ENCODE measurements at regions of chr16 and their contacts with region 1.

Region 1: DNA sequence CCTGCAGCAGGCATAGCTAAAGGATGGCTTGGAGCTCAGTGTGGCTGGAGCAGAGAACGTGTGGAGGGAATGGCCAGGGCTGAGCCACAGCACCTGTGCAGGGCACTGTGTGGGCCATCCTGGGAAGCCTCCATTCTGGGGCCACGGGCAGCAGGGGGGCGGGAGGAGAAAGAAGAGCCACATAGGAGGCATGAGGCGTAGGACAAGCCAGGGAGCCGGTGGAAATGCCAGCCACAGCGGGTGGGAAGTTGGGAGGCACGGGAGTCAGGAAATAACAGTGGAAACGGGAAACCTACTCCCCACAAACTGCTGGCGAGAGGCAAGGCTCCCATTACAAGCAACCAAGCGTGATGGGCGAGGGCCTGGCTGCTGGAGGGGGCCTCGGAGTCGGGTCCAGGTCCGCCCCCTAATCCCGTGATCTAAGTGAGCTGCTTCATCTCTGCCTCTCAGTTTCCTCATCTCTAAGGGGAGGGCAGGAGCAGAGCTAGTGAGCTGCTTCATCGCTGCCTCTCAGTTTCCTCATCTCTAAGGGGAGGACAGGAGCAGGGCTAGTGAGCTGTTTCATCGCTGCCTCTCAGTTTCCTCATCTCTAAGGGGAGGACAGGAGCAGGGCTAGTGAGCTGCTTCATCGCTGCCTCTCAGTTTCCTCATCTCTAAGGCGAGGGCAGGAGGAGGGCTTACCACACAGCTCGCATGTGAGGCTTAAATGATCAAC is 104.9 kb downstream of the ADCY9 start:
- DNase-seq: no peak
- ATAC-seq: peak in 6 of 8 donors; percentile 23 to 60 (median 35)
- H3K4me3 ChIP-seq: peak overlapping the region in 1 of 10 donors; percentile 16
- H3K27ac ChIP-seq: peak overlapping the region in 2 of 10 donors; percentile 33 to 37
- H3K4me1 ChIP-seq: peaks cover 0 to 35% (median 16%) of the 10 kb centered on the region in 9 donors
- H3K27me3 ChIP-seq: no peaks in the 10 kb centered on the region
- CTCF ChIP-seq: no peak

Region 2: DNA sequence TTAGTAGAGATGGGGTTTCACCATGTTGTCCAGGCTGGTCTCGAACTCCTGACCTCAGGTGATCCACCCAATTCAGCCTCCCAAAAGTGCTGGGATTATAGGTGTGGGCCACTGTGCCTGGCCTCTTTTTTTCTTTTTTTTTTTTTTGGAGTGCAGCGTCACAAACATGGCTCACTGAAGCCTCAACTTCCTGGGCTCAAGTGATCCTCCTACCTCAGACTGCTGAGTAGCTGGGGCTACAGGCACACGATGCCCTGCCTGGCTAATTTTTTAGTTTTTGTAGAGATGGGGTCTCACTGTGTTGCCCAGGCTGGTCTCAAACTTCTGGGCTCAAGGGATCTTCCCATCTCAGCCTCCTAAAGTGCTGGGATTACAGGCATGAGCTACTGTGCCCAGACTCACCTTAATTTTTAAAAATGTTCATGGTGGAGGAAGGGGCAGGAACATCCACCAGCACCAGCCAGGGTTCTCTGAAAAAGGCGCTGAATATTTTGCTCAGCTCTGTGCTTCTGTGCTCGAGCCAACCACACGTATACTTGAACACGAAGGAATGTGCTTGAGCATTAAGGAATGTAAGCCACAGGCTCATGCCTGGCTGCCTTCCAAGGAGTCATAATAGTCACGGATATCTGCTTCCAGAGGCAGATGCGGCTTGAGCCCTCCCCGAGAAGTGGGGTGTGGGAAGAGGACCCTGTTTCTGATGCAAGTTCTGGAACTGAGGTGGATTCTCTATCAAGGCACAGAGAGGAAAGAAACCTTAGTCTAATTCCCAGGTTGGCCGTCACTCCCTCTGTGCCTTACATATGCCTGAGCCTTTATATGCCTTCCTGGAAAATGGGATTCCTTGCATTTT is 65.4 kb before region 1 on chr16:
- intact Hi-C with region 1: loop called in 1 of 10 experiments (anchors 5 kb)
- DNase-seq: peak in 1 of 2 donors; percentile 34
- ATAC-seq: no peak
- H3K4me3 ChIP-seq: no peak overlapping the region
- H3K27ac ChIP-seq: peak overlapping the region in 2 of 10 donors; percentile 6 to 53
- H3K4me1 ChIP-seq: peaks cover 6 to 39% (median 31%) of the 10 kb centered on the region in 9 donors
- H3K27me3 ChIP-seq: no peaks in the 10 kb centered on the region
- CTCF ChIP-seq: no peak

Region 3: GRCh38 chr16:3964686-3965290 is 46.6 kb before region 1 on chr16:
- intact Hi-C with region 1: loop called in 1 of 10 experiments (anchors 5 kb)
- DNase-seq: no peak
- ATAC-seq: peak in 2 of 8 donors; percentile 3 to 45
- H3K4me3 ChIP-seq: no peak overlapping the region
- H3K27ac ChIP-seq: peak overlapping the region in 2 of 10 donors; percentile 9 to 22
- H3K4me1 ChIP-seq: peaks cover 3 to 44% (median 38%) of the 10 kb centered on the region in 9 donors
- H3K27me3 ChIP-seq: no peaks in the 10 kb centered on the region
- CTCF ChIP-seq: no peak

Region 4: DNA sequence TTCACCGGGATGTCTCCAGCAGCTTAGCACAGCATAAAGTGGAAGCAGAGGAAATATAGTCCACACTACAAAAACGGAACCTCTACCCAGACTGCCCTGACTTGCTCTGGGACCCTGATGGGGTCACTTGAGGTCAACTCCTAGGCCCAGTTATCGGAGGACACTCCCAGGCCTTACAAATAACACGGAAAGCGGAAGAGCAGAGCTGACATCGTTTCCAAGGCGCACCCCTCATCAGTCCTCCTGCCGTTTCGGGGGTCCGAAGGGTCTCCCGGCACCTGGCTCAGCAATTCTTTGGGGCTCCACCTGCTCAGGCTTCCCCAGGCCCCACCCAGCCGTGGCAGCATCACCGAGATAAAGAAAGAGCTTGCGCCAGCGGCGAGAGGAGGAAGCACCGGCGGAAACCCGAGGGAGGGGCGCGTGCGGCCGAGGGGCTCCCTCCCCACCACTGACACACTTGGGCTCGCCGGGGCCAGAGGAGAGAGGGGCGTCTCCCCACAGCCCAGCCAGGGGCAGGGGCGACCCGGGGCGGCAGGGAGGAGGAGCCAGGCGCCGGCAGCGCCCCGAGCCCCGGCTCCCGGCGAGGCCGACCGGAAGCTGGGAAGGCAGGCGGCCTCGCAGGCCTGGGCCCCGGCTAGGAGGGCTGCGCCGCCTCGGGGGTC is 404.3 kb after region 1 on chr16:
- intact Hi-C with region 1: no loop called
- DNase-seq: peak in 1 of 2 donors; percentile 54
- ATAC-seq: peak; percentile 5 to 32 (median 18)
- H3K4me3 ChIP-seq: peak overlapping the region; percentile 77 to 99 (median 94)
- H3K27ac ChIP-seq: peak overlapping the region; percentile 56 to 95 (median 86)
- H3K4me1 ChIP-seq: peaks cover 6 to 54% (median 38%) of the 10 kb centered on the region in 9 donors
- H3K27me3 ChIP-seq: no peaks in the 10 kb centered on the region
- CTCF ChIP-seq: no peak